CD4-positive, alpha-beta memory T cell (primary cell): ENCODE measurements at regions of chr6 and their contacts with region 1.

Region 1: GRCh38 chr6:36131511-36132245 is 1.4 kb downstream of the MAPK13 start:
- DNase-seq: peak; percentile 43 to 79 (median 48)
- H3K4me3 ChIP-seq: peak overlapping the region; percentile 58 to 85
- H3K4me3 Mint-ChIP-seq: peak overlapping the region; percentile 87 to 91 (median 88)
- H3K27ac ChIP-seq: peak overlapping the region; percentile 86
- H3K27ac Mint-ChIP-seq: peak overlapping the region; percentile 88 to 93 (median 91)
- H3K4me1 ChIP-seq: peaks cover 52% of the 10 kb centered on the region
- H3K4me1 Mint-ChIP-seq: peaks cover 33 to 50% (median 43%) of the 10 kb centered on the region in 4 donors
- H3K27me3 ChIP-seq: no peaks in the 10 kb centered on the region
- H3K27me3 Mint-ChIP-seq: no peaks in the 10 kb centered on the region

Region 2: DNA sequence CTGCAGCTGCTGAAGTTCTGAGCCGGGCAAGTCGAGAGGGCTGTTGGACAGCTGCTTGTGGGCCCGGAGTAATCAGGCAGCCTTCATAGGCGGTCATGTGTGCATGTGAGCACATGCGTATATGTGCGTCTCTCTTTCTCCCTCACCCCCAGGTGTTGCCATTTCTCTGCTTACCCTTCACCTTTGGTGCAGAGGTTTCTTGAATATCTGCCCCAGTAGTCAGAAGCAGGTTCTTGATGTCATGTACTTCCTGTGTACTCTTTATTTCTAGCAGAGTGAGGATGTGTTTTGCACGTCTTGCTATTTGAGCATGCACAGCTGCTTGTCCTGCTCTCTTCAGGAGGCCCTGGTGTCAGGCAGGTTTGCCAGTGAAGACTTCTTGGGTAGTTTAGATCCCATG is 22.6 kb before region 1 on chr6:
- CTCF ChIA-PET with region 1: interaction called, 70 read pairs
- POLR2A ChIA-PET with region 1: interaction called, 24 read pairs
- intact Hi-C with region 1: no loop called
- DNase-seq: peak; percentile 59 to 72 (median 61)
- H3K4me3 ChIP-seq: no peak overlapping the region
- H3K4me3 Mint-ChIP-seq: peak overlapping the region in 7 of 8 donors; percentile 7 to 57 (median 51)
- H3K27ac ChIP-seq: peak overlapping the region; percentile 22
- H3K27ac Mint-ChIP-seq: peak overlapping the region; percentile 80 to 95 (median 91)
- H3K4me1 ChIP-seq: peaks cover 40% of the 10 kb centered on the region
- H3K4me1 Mint-ChIP-seq: peaks cover 26 to 48% (median 36%) of the 10 kb centered on the region in 4 donors
- H3K27me3 ChIP-seq: no peaks in the 10 kb centered on the region
- H3K27me3 Mint-ChIP-seq: no peaks in the 10 kb centered on the region

Region 3: GRCh38 chr6:36114798-36115408 is 16.8 kb before region 1 on chr6:
- CTCF ChIA-PET with region 1: interaction called, 70 read pairs
- POLR2A ChIA-PET with region 1: interaction called, 24 read pairs
- intact Hi-C with region 1: loop called (anchors 2 kb)
- DNase-seq: peak in 2 of 5 donors; percentile 35 to 41
- H3K4me3 ChIP-seq: peak overlapping the region in 1 of 2 donors; percentile 21
- H3K4me3 Mint-ChIP-seq: peak overlapping the region; percentile 7 to 92 (median 77)
- H3K27ac ChIP-seq: peak overlapping the region; percentile 42
- H3K27ac Mint-ChIP-seq: peak overlapping the region; percentile 88 to 96 (median 95)
- H3K4me1 ChIP-seq: peaks cover 80% of the 10 kb centered on the region
- H3K4me1 Mint-ChIP-seq: peaks cover 53 to 76% (median 66%) of the 10 kb centered on the region in 4 donors
- H3K27me3 ChIP-seq: no peaks in the 10 kb centered on the region
- H3K27me3 Mint-ChIP-seq: no peaks in the 10 kb centered on the region

Region 4: GRCh38 chr6:36142971-36143843 is 11.5 kb after region 1 on chr6:
- CTCF ChIA-PET with region 1: interaction called, 5 read pairs
- POLR2A ChIA-PET with region 1: interaction called, 10 read pairs
- intact Hi-C with region 1: no loop called
- DNase-seq: no peak
- H3K4me3 ChIP-seq: no peak overlapping the region
- H3K4me3 Mint-ChIP-seq: no peak overlapping the region
- H3K27ac ChIP-seq: no peak overlapping the region
- H3K27ac Mint-ChIP-seq: peak overlapping the region in 3 of 7 donors; percentile 28 to 81 (median 75)
- H3K4me1 ChIP-seq: peaks cover 36% of the 10 kb centered on the region
- H3K4me1 Mint-ChIP-seq: peaks cover 14 to 41% (median 23%) of the 10 kb centered on the region in 4 donors
- H3K27me3 ChIP-seq: no peaks in the 10 kb centered on the region
- H3K27me3 Mint-ChIP-seq: no peaks in the 10 kb centered on the region

Region 5: DNA sequence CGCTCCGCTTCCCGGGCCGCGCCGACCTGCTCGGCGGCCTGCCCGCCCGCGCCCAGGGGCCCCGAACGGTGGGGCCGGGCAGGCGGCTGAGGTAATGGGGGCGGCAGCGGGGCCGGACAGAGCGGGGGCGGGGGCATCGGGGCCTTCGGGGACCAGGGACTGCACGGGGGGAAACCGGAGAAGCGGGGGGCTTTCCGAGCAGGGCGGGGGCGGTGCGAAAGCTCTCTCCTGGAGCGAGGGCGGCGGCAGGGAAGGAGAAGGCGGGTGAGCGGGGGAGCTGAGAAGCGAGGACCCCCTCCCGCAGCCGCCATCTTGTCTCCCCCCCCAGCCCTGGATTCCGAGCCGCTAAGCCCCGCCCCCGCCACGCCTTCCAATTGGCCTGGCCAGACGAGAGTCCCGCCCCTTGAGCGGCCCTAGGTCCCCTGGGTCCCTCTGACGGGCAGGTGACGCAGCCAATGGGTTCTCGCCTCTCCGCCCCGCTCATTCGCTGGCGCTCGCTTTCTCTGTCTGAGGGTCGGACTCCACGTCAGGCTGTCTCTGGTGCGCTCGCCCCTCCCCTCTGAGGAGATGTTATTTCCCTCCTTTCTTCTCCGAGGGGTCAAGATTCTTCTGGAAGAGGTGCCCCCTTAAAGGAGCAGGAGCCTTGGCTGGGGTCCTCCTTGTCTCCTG is 65.3 kb after region 1 on chr6:
- CTCF ChIA-PET with region 1: interaction called, 9 read pairs
- POLR2A ChIA-PET with region 1: interaction called, 37 read pairs
- intact Hi-C with region 1: loop called (anchors 2 kb)
- DNase-seq: peak; percentile 96 to 99 (median 97)
- H3K4me3 ChIP-seq: peak overlapping the region; percentile 71 to 76
- H3K4me3 Mint-ChIP-seq: peak overlapping the region; percentile 89 to 94 (median 92)
- H3K27ac ChIP-seq: peak overlapping the region; percentile 73
- H3K27ac Mint-ChIP-seq: peak overlapping the region; percentile 83 to 96 (median 92)
- H3K4me1 ChIP-seq: peaks cover 42% of the 10 kb centered on the region
- H3K4me1 Mint-ChIP-seq: peaks cover 26 to 56% (median 41%) of the 10 kb centered on the region in 4 donors
- H3K27me3 ChIP-seq: no peaks in the 10 kb centered on the region
- H3K27me3 Mint-ChIP-seq: no peaks in the 10 kb centered on the region

Region 6: DNA sequence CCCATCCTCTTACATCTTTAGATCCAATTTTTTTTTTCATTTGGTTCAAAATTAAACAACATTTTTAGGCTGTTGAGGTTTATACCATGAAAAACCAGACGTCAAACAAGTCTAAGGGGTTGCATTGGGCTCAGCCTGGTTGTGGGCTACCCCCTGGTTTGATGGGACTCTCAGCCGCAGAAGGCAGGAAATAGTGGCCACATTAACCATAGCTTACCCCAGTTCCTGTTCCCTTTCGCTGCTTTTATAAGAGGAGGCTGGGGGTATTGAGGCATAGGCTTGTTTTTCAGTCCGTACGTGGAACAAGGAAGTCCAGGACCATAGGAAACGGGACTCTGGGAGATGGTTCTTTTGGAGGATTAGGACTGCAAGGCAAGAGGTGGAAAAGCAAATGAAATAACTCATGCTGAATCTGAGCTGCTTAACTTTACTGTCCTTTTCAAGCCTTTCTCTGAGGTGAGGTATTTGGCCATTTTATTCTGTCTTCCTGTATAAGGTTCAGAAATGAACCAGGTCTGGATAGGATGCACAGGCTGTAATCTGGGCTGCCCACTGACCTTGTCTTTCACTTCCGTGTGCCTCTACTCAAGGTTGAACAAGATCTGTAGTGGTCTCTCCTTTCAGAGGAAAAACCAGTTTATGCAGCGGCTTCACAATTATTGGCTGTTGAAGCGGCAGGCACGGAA is 72.5 kb after region 1 on chr6:
- CTCF ChIA-PET with region 1: interaction called, 6 read pairs
- POLR2A ChIA-PET with region 1: interaction called, 12 read pairs
- intact Hi-C with region 1: no loop called
- DNase-seq: peak; percentile 71 to 81 (median 77)
- H3K4me3 ChIP-seq: peak overlapping the region in 1 of 2 donors; percentile 11
- H3K4me3 Mint-ChIP-seq: peak overlapping the region; percentile 48 to 86 (median 76)
- H3K27ac ChIP-seq: no peak overlapping the region
- H3K27ac Mint-ChIP-seq: peak overlapping the region; percentile 41 to 93 (median 75)
- H3K4me1 ChIP-seq: peaks cover 53% of the 10 kb centered on the region
- H3K4me1 Mint-ChIP-seq: peaks cover 50 to 73% (median 61%) of the 10 kb centered on the region in 4 donors
- H3K27me3 ChIP-seq: no peaks in the 10 kb centered on the region
- H3K27me3 Mint-ChIP-seq: no peaks in the 10 kb centered on the region

Region 7: DNA sequence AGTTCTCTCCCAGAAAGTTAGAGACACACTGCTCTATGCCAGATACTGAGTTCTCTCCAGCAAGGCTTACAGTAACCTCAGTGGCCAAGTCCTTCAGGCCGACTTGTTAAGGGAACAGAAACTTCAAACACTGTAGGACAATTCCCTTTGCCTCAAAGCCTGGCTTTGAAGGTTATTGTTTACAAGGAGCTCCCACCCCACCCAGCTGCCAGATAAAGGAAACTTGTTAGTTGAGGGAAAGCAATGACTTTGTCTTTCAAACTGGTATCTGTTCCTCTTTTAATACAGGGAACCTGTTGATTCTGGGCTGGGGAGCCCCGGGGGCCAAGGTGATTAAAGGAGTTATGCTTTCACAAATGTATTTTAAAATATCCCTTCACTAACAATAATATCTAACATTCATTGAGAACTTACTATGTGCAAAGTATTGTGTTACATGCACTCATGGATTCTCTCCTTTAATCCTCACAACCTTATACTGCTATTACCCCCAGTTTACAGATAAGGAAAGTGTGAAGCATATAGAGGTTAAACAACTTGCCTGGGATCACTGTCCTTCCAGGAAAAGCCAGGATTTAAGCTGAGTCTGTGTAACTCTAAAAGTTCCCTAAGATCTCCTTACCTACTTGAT is 519.3 kb after region 1 on chr6:
- CTCF ChIA-PET with region 1: no interaction called
- POLR2A ChIA-PET with region 1: no interaction called
- intact Hi-C with region 1: no loop called
- DNase-seq: no peak
- H3K4me3 ChIP-seq: no peak overlapping the region
- H3K4me3 Mint-ChIP-seq: no peak overlapping the region
- H3K27ac ChIP-seq: no peak overlapping the region
- H3K27ac Mint-ChIP-seq: no peak overlapping the region
- H3K4me1 ChIP-seq: no peaks in the 10 kb centered on the region
- H3K4me1 Mint-ChIP-seq: no peaks in the 10 kb centered on the region
- H3K27me3 ChIP-seq: peaks cover 5% of the 10 kb centered on the region
- H3K27me3 Mint-ChIP-seq: peaks cover 12 to 13% of the 10 kb centered on the region in 2 donors